Activated T-helper 2 cell treated with anti-CD3 and anti-CD28 coated beads, Interferon-gamma antibody, Interleukin-2, Interleukin-4, amounts not matched to agents 10 μg/mL and 5 μg/mL and 100 μg/mL, durations not matched to agents 14 hours and 24 hours and 36 hours (primary cell): ENCODE measurements at regions of chr4 and their contacts with region 1.

Region 1: GRCh38 chr4:56799824-56800756 is 21.4 kb downstream of the SPINK2 start:
- DNase-seq: peak; percentile 77
- H3K4me3 Mint-ChIP-seq: peak overlapping the region; percentile 84
- H3K27ac Mint-ChIP-seq: no peak overlapping the region
- H3K4me1 Mint-ChIP-seq: peaks cover 31% of the 10 kb centered on the region
- H3K27me3 Mint-ChIP-seq: peaks cover 27% of the 10 kb centered on the region

Region 2: GRCh38 chr4:56424697-56425514 is 375.2 kb before region 1 on chr4:
- intact Hi-C with region 1: no loop called
- DNase-seq: no peak
- H3K4me3 Mint-ChIP-seq: no peak overlapping the region
- H3K27ac Mint-ChIP-seq: no peak overlapping the region
- H3K4me1 Mint-ChIP-seq: peaks cover 17% of the 10 kb centered on the region
- H3K27me3 Mint-ChIP-seq: no peaks in the 10 kb centered on the region

Region 3: DNA sequence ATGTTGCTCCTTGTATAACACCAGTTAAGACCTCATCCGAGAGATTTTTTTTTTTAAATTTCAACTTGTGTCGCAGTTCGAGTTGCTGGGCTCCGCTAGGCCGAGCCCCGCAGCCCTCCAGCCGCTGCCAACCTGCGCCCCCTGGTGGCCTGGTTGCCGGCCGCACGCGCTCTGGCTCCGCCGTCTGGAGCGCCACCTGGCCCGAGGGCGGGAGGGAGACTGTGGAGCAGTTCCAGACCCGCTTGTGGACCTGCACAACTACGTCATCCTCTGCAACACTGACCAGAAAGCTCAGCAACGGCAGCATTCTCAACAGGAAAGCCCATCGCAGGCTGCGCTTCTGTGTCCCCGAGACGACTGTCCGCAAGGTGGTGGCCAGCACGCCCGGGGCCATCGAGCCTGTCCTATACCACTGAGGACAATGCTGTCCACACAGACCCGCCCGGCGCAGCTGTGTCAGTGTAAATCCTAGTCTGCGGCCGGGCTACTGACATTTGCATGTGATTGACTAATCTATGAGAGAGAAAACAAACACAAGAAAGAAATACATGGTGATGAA is 255.4 kb before region 1 on chr4:
- intact Hi-C with region 1: loop called (anchors 5 kb)
- DNase-seq: peak; percentile 74
- H3K4me3 Mint-ChIP-seq: peak overlapping the region; percentile 71
- H3K27ac Mint-ChIP-seq: no peak overlapping the region
- H3K4me1 Mint-ChIP-seq: peaks cover 16% of the 10 kb centered on the region
- H3K27me3 Mint-ChIP-seq: peaks cover 25% of the 10 kb centered on the region

Region 4: DNA sequence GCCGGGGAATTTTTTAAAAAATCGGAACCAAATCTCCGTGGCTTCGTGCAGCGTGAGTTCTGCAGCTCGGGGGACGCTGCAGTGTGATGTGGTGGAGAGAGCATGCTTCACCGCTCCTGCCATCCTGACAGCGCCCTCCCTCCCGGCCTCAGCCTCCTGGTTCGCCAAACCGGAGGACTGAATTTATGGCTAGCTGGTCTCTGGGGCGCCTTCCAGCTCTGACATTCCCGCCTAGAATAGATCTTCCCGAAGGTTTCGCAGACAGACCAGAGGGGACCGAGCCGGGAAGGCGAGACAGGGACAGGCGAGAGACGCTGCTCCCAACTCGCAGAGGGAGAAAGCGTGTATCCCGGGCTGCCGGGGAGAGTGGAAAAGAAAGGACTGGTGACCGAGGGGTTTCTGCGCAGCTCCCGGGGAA is 144.9 kb before region 1 on chr4:
- intact Hi-C with region 1: loop called (anchors 2 kb)
- DNase-seq: no peak
- H3K4me3 Mint-ChIP-seq: peak overlapping the region; percentile 87
- H3K27ac Mint-ChIP-seq: peak overlapping the region; percentile 65
- H3K4me1 Mint-ChIP-seq: peaks cover 61% of the 10 kb centered on the region
- H3K27me3 Mint-ChIP-seq: peaks cover 31% of the 10 kb centered on the region

Region 5: GRCh38 chr4:56723201-56723605 is 76.9 kb before region 1 on chr4:
- intact Hi-C with region 1: loop called (anchors 5 kb)
- DNase-seq: no peak
- H3K4me3 Mint-ChIP-seq: no peak overlapping the region
- H3K27ac Mint-ChIP-seq: peak overlapping the region; percentile 55
- H3K4me1 Mint-ChIP-seq: peaks cover 11% of the 10 kb centered on the region
- H3K27me3 Mint-ChIP-seq: peaks cover 2% of the 10 kb centered on the region

Region 6: GRCh38 chr4:56821381-56822243 is 21.5 kb after region 1 on chr4 and contains the start of gene SPINK2:
- intact Hi-C with region 1: loop called (anchors 1 kb)
- DNase-seq: peak; percentile 45
- H3K4me3 Mint-ChIP-seq: peak within 1 kb of the TSS; percentile 58
- H3K27ac Mint-ChIP-seq: no peak within 1 kb of the TSS
- H3K4me1 Mint-ChIP-seq: peaks cover 24% of the 10 kb centered on the region
- H3K27me3 Mint-ChIP-seq: peaks cover 41% of the 10 kb centered on the region
- total RNA-seq, gene SPINK2: 0.75 TPM in 1 of 2 replicates, not detected in the other

Region 7: DNA sequence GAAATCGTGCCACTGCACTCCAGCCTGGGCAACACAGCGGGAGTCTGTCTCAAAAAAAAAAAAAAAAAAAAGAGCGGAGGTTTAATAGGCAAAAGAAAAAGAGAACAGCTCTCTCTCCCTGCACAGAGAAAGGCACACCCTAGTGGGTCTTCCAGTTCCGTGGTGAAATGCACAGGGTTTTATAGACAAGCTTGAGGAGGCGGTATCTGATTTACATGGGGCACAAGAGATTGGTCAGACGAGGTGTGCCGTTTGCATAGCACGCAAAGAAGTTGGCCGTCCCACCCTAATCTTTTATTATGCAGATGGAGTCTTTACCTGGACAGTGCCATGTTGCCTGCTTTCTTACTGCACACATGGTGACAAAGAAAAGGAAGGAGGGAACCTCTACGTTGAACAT is 74.1 kb after region 1 on chr4:
- intact Hi-C with region 1: no loop called
- DNase-seq: no peak
- H3K4me3 Mint-ChIP-seq: no peak overlapping the region
- H3K27ac Mint-ChIP-seq: no peak overlapping the region
- H3K4me1 Mint-ChIP-seq: peaks cover 2% of the 10 kb centered on the region
- H3K27me3 Mint-ChIP-seq: peaks cover 8% of the 10 kb centered on the region

Region 8: DNA sequence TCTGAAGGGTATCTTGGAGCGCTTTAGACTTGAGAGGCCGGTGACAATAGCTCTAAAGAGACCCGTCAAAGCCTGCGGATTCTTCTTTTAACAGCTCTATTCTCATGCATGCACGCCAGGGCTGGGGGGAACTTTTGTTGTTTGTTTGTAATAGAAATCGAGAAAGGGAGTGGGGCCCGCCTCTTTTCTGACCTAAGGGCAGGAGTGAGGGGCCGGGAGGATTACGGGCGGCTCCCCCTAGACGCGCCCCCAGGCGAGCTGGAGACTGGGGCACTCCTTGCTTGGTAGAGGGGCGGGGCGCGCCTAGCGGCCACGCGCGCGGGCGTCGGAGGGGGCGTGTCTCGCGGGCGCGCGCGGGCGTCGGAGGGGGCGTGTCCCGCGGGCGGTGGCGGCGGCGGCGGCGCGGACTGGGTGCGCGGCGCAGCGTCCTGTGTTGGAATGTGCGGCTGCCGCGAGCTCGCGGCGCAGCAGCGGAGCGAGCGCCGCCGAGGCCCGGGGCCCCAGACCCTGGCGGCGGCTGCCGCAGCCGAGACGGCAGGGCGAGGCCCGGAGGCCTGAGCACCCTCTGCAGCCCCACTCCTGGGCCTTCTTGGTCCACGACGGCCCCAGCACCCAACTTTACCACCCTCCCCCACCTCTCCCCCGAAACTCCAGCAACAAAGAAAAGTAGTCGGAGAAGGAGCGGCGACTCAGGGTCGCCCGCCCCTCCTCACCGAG is 107.6 kb after region 1 on chr4 and contains the start of gene REST:
- intact Hi-C with region 1: loop called (anchors 5 kb)
- DNase-seq: peak; percentile 78
- H3K4me3 Mint-ChIP-seq: peak within 1 kb of the TSS; percentile 84
- H3K27ac Mint-ChIP-seq: peak within 1 kb of the TSS; percentile 72
- H3K4me1 Mint-ChIP-seq: peaks cover 34% of the 10 kb centered on the region
- H3K27me3 Mint-ChIP-seq: peaks cover 10% of the 10 kb centered on the region
- total RNA-seq, gene REST: 44.5 and 47.7 TPM in 2 replicates